Caco-2 (cell line): ENCODE measurements at regions of chr3 and their contacts with region 1.

Region 1: DNA sequence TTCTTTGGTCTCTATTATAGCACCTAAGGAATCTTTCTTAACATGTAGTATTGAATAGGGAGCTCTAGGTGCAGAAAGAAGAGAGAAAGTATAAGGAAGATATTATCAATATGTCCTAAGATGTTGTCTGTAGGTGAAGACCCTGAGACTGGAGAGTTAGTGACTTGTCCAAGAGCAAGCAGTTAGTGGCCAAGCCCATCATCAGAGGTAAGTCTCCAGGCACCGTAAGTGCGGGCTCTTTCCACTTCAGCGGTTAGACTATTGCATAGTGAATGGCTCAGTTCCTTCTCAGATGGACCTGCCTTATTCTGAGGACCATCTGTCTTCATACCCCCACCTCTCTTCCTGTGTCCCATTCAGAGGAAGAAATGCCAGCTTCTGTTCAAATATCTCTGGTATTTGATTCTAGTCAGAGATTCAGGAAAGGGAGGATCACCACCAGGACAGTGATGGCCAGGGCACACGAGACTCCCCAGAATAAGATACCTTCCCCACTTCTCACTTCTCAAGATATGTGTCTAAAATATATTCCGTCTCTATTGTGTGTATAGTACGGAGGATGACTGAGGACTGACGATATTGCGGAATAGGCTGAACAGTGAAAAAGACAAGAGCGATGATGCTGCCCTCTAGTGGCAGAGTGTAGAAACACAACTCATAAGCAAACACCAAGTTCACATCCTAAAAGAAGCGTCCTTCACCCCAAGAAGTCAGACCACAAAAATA is 19.1 kb upstream of the ADGRG7 start:
- DNase-seq: peak; percentile 48 to 65
- H3K4me3 ChIP-seq: no peak overlapping the region
- H3K4me3 Mint-ChIP-seq: peak overlapping the region; percentile 64
- H3K27ac Mint-ChIP-seq: no peak overlapping the region
- H3K4me1 ChIP-seq: peaks cover 13% of the 10 kb centered on the region
- H3K4me1 Mint-ChIP-seq: peaks cover 11% of the 10 kb centered on the region
- H3K27me3 ChIP-seq: no peaks in the 10 kb centered on the region
- H3K27me3 Mint-ChIP-seq: no peaks in the 10 kb centered on the region
- CTCF ChIP-seq: peak; percentile 82 to 87

Region 2: GRCh38 chr3:99833617-99834205 is 756.6 kb before region 1 on chr3:
- CTCF ChIA-PET with region 1: no interaction called
- POLR2A ChIA-PET with region 1: no interaction called
- intact Hi-C with region 1: loop called (anchors 2 kb)
- DNase-seq: no peak
- H3K4me3 ChIP-seq: no peak overlapping the region
- H3K4me3 Mint-ChIP-seq: no peak overlapping the region
- H3K27ac Mint-ChIP-seq: no peak overlapping the region
- H3K4me1 ChIP-seq: no peaks in the 10 kb centered on the region
- H3K4me1 Mint-ChIP-seq: peaks cover 16% of the 10 kb centered on the region
- H3K27me3 ChIP-seq: no peaks in the 10 kb centered on the region
- H3K27me3 Mint-ChIP-seq: no peaks in the 10 kb centered on the region
- CTCF ChIP-seq: no peak

Region 3: GRCh38 chr3:100400780-100401673 is 189.2 kb before region 1 on chr3 and contains the starts of genes LNP1 and TOMM70:
- CTCF ChIA-PET with region 1: no interaction called
- POLR2A ChIA-PET with region 1: no interaction called
- intact Hi-C with region 1: loop called (anchors 2 kb)
- DNase-seq: peak; percentile 95 to 97
- H3K4me3 ChIP-seq: peak within 1 kb of the TSS; percentile 83
- H3K4me3 Mint-ChIP-seq: peak within 1 kb of the TSS; percentile 85
- H3K27ac Mint-ChIP-seq: peak within 1 kb of the TSS; percentile 90
- H3K4me1 ChIP-seq: peaks cover 5% of the 10 kb centered on the region
- H3K4me1 Mint-ChIP-seq: no peaks in the 10 kb centered on the region
- H3K27me3 ChIP-seq: no peaks in the 10 kb centered on the region
- H3K27me3 Mint-ChIP-seq: no peaks in the 10 kb centered on the region
- CTCF ChIP-seq: no peak
- total RNA-seq, gene LNP1: 2.4 and 3.3 TPM in 2 replicates
- total RNA-seq, gene TOMM70: 50.7 and 53.3 TPM in 2 replicates

Region 4: GRCh38 chr3:100492059-100493006 is 97.9 kb before region 1 on chr3 and contains the start of gene TMEM45A:
- CTCF ChIA-PET with region 1: no interaction called
- POLR2A ChIA-PET with region 1: no interaction called
- intact Hi-C with region 1: loop called (anchors 1 kb)
- DNase-seq: peak; percentile 94 to 97
- H3K4me3 ChIP-seq: peak within 1 kb of the TSS; percentile 62
- H3K4me3 Mint-ChIP-seq: peak within 1 kb of the TSS; percentile 73
- H3K27ac Mint-ChIP-seq: peak within 1 kb of the TSS; percentile 22
- H3K4me1 ChIP-seq: peaks cover 4% of the 10 kb centered on the region
- H3K4me1 Mint-ChIP-seq: peaks cover 19% of the 10 kb centered on the region
- H3K27me3 ChIP-seq: no peaks in the 10 kb centered on the region
- H3K27me3 Mint-ChIP-seq: no peaks in the 10 kb centered on the region
- CTCF ChIP-seq: no peak
- total RNA-seq, gene TMEM45A: 4.3 and 5.6 TPM in 2 replicates

Region 5: DNA sequence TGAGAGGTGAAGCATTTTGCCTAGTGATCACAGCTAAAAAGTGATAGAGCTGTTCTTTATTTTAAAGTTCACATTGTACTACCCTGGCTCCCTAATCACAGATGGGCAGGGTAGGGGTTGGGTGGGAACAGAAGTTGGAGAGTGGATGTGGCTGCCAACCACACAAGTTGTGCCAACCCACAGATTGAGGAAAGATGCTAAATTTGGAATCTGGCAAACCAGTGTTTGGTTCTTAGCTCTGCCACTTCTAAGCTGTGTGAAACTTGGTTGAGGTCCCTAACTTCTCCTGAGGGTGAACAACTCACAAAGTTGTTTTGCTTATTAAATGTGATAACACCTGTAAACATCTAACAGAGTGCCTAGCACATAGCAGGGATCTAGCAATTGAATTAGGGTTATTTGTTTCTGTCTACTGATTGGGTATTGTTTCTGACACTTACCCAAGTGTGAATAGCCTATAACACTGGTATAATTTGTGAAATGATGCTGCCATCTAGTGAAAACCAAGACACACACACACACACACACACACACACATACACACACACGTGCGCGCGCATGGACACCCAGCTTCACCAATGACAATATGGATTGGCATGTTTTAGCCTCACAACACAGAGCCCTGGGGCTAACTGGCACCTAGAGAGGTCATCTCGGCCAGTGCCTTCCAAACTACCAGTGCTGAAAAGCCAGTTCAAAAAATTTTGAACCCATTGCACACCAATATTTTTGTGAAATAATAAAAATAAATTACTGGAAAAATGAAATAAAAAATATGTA is 44.4 kb after region 1 on chr3:
- CTCF ChIA-PET with region 1: interaction called, 13 read pairs
- POLR2A ChIA-PET with region 1: no interaction called
- intact Hi-C with region 1: loop called (anchors 1 kb)
- DNase-seq: peak; percentile 80 to 84
- H3K4me3 ChIP-seq: 0 out of 2 replicates have a peak overlapping the region, but pooled peaks have one; percentile 2
- H3K4me3 Mint-ChIP-seq: peak overlapping the region; percentile 69
- H3K27ac Mint-ChIP-seq: peak overlapping the region; percentile 63
- H3K4me1 ChIP-seq: peaks cover 35% of the 10 kb centered on the region
- H3K4me1 Mint-ChIP-seq: peaks cover 12% of the 10 kb centered on the region
- H3K27me3 ChIP-seq: no peaks in the 10 kb centered on the region
- H3K27me3 Mint-ChIP-seq: no peaks in the 10 kb centered on the region
- CTCF ChIP-seq: no peak